PC-3 (cell line): ENCODE measurements at regions of chr7 and their contacts with region 1.

Region 1: GRCh38 chr7:4883374-4884144 is at the start of gene RADIL:
- DNase-seq: peak; percentile 91
- ATAC-seq: peak; percentile 81
- H3K4me3 ChIP-seq: peak within 1 kb of the TSS; percentile 70
- H3K27ac ChIP-seq: no peak within 1 kb of the TSS
- H3K4me1 ChIP-seq: 0 out of 2 replicates have a peak, but pooled peaks cover 10% of the 10 kb centered on the region
- H3K27me3 ChIP-seq: no peaks in the 10 kb centered on the region
- CTCF ChIP-seq: peak; percentile 75
- total RNA-seq, gene RADIL: 5.6 and 9.3 TPM in 2 replicates

Region 2: DNA sequence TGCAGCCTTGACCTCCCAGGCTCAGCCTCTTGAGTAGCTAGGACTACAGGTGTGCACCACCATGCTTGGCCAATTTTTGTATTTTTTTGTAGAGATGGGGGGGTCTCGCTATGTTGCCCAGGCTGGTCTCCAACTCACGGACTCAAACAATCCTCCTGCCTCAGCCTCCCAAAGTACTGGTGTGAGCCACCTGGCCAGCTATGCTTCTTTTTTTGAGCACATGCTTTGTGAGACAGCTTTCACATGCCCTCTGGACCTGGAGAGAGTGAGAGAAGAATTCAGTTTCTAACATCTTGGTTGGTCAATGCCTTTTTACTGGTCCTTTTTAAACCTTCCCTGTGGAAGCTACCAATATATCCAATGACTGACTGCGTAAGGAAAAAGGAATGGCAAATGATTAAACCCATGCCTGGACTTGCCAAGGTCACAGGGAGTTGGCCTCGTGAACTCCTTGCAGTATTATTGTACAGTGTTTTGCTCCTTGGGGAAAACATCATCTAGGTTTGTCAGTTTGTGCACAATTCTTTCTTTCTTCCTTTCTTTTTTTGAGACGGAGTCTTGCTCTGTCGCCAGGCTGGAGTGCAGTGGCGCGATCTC is 207.7 kb before region 1 on chr7:
- CTCF ChIA-PET with region 1: no interaction called
- POLR2A ChIA-PET with region 1: interaction called, 20 read pairs
- intact Hi-C with region 1: no loop called
- DNase-seq: no peak
- ATAC-seq: no peak
- H3K4me3 ChIP-seq: no peak overlapping the region
- H3K27ac ChIP-seq: no peak overlapping the region
- H3K4me1 ChIP-seq: no peaks in the 10 kb centered on the region
- H3K27me3 ChIP-seq: no peaks in the 10 kb centered on the region
- CTCF ChIP-seq: no peak

Region 3: DNA sequence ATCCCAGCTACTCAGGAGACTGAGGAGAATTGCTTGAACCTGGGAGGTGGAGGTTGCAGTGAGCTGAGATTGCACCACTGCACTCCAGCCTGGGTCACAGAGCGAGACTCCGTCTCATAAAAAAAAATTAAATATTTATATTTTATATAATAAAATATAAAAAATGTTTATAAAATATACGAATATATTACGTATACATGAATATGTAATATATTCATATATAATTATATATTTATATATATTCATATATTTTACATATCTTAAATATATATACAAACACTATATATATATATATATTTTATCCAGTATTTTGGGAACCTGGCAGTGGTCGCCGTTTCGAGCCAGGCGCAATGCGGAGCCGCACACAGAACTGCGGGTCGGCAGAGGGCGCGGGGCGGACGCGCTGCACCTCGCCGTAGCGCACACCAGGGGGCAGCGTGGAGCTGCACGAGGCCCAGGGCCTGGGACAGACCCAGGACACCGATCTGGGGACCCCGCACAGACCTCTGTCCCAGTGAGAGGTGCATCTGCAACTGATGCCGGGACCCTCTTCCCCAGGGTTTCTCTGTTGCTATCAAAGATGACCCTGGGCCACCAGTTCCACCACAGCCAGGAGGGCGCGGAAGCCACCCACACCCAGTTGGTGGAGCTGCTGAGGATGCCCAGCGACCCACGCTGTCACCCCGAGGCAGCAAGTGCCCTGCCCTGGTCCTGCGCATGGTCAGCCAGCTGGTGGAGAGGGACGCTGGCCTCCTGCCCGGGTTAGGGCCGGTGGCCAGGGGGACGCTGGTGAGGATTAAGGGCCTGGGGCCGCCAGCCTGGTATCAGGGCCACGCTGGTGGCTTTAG is 85.5 kb before region 1 on chr7:
- CTCF ChIA-PET with region 1: interaction called, 3 read pairs
- POLR2A ChIA-PET with region 1: no interaction called
- intact Hi-C with region 1: loop called (anchors 1 kb)
- DNase-seq: peak; percentile 68
- ATAC-seq: peak; percentile 76
- H3K4me3 ChIP-seq: no peak overlapping the region
- H3K27ac ChIP-seq: no peak overlapping the region
- H3K4me1 ChIP-seq: no peaks in the 10 kb centered on the region
- H3K27me3 ChIP-seq: no peaks in the 10 kb centered on the region
- CTCF ChIP-seq: peak; percentile 67

Region 4: GRCh38 chr7:4849369-4849768 is 34.2 kb before region 1 on chr7:
- CTCF ChIA-PET with region 1: interaction called, 10 read pairs
- POLR2A ChIA-PET with region 1: no interaction called
- intact Hi-C with region 1: loop called (anchors 1 kb)
- DNase-seq: peak; percentile 57
- ATAC-seq: peak; percentile 96
- H3K4me3 ChIP-seq: no peak overlapping the region
- H3K27ac ChIP-seq: no peak overlapping the region
- H3K4me1 ChIP-seq: no peaks in the 10 kb centered on the region
- H3K27me3 ChIP-seq: no peaks in the 10 kb centered on the region
- CTCF ChIP-seq: peak; percentile 66

Region 5: GRCh38 chr7:4919969-4920766 is 36.6 kb after region 1 on chr7:
- CTCF ChIA-PET with region 1: no interaction called
- POLR2A ChIA-PET with region 1: no interaction called
- intact Hi-C with region 1: no loop called
- DNase-seq: no peak
- ATAC-seq: no peak
- H3K4me3 ChIP-seq: no peak overlapping the region
- H3K27ac ChIP-seq: no peak overlapping the region
- H3K4me1 ChIP-seq: no peaks in the 10 kb centered on the region
- H3K27me3 ChIP-seq: no peaks in the 10 kb centered on the region
- CTCF ChIP-seq: no peak

Region 6: DNA sequence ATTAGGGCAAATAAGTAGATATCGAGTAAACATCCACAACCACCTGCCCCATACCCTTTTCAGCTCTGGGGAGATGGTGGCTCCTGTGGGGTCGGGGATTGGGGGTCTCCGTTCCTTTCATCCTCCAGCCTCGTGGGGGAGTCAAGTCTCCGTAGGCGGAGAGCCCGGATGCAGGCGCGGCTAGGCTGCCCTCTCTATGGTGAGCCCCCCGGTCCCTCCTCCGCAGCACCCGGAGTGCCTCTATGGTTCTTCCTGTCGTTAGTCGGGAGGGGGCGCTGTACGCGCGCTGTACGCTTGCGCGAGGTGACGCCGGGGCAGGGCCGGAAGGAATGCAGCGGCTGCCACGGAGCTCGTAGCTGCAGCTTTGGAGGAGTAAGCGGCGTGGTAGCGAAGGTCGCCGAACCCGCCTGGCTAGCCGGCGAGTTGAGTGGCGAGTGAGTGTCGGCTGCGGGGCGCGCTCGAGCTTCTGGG is 90.2 kb after region 1 on chr7:
- CTCF ChIA-PET with region 1: interaction called, 3 read pairs
- POLR2A ChIA-PET with region 1: no interaction called
- intact Hi-C with region 1: loop called (anchors 10 kb)
- DNase-seq: peak; percentile 92
- ATAC-seq: peak; percentile 92
- H3K4me3 ChIP-seq: peak overlapping the region; percentile 77
- H3K27ac ChIP-seq: peak overlapping the region; percentile 66
- H3K4me1 ChIP-seq: no peaks in the 10 kb centered on the region; the same call in 1 of the 2 replicates
- H3K27me3 ChIP-seq: no peaks in the 10 kb centered on the region
- CTCF ChIP-seq: peak; percentile 80

Region 7: DNA sequence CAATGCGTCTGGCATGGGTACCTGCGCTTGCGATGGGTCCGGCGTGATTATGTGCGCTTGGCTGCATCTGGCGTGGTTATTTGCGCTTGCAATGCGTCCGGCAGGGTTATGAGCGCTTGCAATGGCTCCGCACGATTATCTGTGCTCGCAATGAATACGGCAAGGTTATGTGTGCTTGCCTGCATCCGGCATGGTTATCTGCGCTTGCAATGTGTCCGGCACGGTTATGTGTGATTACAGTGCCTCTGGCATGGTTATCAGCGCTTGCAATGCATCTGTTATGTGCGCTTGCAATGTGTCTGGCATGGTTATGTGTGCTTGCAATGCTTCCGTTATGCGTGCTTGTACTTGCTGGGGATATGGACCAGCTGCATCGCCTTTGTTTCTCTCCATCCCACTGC is 199.8 kb after region 1 on chr7:
- CTCF ChIA-PET with region 1: interaction called, 6 read pairs
- POLR2A ChIA-PET with region 1: interaction called, 13 read pairs
- intact Hi-C with region 1: no loop called
- DNase-seq: no peak
- ATAC-seq: no peak
- H3K4me3 ChIP-seq: no peak overlapping the region
- H3K27ac ChIP-seq: no peak overlapping the region
- H3K4me1 ChIP-seq: no peaks in the 10 kb centered on the region
- H3K27me3 ChIP-seq: no peaks in the 10 kb centered on the region
- CTCF ChIP-seq: no peak